Activated T-helper 1 cell treated with anti-CD3 and anti-CD28 coated beads, Interleukin-12 subunit alpha, Interleukin-12 subunit beta, Interleukin-2, Interleukin-4 antibody, amounts not matched to agents 30 ng/mL and 10 ng/mL and 1 ng/mL, durations not matched to agents 14 hours and 24 hours and 36 hours (primary cell): ENCODE measurements at regions of chr12 and their contacts with region 1.

Region 1: DNA sequence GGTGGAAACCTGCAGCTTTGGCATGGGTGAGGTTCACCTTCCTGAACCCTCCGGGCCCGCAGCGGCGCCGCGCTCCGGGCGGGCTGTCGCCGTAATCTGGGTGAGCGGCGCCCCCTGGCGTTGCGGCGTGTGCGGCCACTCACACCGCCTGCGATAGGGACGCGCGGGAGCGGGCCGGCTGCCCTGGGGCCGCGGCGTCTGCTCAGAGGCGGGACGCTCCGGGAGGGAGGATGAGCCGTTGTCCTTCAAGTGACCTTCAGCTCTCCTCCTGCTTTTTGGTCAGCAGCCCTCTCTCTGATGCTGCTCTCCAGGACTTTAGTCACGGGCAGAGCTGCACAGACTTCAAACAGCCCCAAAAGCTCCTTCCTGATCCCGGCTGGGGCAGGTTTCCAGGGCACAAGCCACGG is 211.7 kb upstream of the FKBP4 start:
- DNase-seq: peak; percentile 50
- H3K4me3 Mint-ChIP-seq: no peak overlapping the region
- H3K27ac Mint-ChIP-seq: no peak overlapping the region
- H3K4me1 Mint-ChIP-seq: no peaks in the 10 kb centered on the region
- H3K27me3 Mint-ChIP-seq: peaks cover 29% of the 10 kb centered on the region

Region 2: DNA sequence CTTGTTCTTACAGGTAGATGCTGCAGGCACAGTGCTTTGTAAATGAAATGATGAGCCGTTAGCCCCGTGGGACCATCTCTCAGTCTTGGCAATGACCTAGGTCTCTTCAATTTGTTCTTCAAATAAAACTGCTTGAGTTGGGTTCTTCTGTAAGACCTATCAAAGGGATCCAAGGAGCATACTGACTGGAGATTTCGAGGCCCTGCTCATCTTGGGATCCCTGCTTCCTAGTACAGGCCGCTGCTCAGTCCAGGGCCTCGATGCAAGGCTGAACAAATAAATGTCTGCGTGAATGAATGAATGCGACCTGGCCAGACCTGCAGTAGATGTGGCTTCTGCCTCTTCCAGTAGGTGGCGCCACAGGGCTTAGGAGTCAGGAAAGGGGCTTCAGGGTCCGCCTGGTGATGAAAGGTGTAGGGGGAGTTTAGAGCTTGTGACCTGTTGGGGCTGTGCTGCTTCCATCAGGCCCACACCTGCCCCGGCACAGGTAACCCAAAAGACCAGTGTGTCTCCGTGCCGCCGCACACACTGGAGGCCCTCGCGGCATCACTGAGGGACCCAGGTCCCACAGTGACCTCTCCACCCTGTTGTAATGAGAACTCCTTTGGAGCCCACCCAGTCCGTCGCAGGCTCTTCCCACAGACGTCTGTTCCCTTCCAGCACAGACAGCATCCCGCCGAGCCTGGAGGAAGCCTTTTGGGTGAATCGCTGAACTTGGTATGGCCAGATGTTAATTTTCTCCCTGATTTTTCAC is 525.9 kb before region 1 on chr12:
- intact Hi-C with region 1: loop called (anchors 2 kb)
- DNase-seq: no peak
- H3K4me3 Mint-ChIP-seq: no peak overlapping the region
- H3K27ac Mint-ChIP-seq: no peak overlapping the region
- H3K4me1 Mint-ChIP-seq: peaks cover 10% of the 10 kb centered on the region
- H3K27me3 Mint-ChIP-seq: peaks cover 68% of the 10 kb centered on the region

Region 3: DNA sequence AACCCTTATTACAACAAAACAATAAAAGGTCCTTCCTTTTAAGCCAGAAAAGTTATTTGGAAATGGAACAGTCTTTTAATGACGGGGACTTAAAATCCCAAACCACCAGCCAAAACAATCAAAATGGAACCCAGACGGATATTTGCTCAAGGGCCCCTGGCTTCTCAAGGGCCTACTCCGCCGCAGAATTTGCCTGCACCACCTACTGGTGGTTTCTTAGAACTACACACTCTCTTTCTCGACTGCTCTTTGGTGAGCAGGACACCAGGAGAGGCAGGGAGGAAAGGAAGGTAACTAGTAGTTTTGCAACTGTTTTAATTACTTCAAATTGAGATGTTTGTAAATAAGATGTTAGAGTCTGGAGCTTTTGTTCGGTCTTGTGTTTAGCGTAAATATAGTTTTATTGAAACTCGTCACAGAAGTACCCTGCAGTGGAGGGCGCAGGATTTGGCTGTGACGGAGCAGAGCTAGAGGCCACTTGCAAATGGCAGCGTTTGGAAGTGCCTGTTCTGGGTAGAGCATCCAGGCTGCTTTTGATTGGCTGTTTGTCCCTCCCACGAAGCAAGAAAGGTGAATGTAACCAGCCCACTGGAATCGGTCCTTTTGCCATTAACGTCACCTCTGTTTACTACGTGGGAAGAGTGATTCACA is 291.8 kb before region 1 on chr12:
- intact Hi-C with region 1: loop called (anchors 10 kb)
- DNase-seq: peak; percentile 21
- H3K4me3 Mint-ChIP-seq: no peak overlapping the region
- H3K27ac Mint-ChIP-seq: no peak overlapping the region
- H3K4me1 Mint-ChIP-seq: peaks cover 8% of the 10 kb centered on the region
- H3K27me3 Mint-ChIP-seq: peaks cover 16% of the 10 kb centered on the region

Region 4: GRCh38 chr12:2358986-2359658 is 224.0 kb before region 1 on chr12:
- intact Hi-C with region 1: loop called (anchors 1 kb)
- DNase-seq: no peak
- H3K4me3 Mint-ChIP-seq: peak overlapping the region; percentile 12
- H3K27ac Mint-ChIP-seq: peak overlapping the region; percentile 49
- H3K4me1 Mint-ChIP-seq: peaks cover 53% of the 10 kb centered on the region
- H3K27me3 Mint-ChIP-seq: peaks cover 7% of the 10 kb centered on the region

Region 5: DNA sequence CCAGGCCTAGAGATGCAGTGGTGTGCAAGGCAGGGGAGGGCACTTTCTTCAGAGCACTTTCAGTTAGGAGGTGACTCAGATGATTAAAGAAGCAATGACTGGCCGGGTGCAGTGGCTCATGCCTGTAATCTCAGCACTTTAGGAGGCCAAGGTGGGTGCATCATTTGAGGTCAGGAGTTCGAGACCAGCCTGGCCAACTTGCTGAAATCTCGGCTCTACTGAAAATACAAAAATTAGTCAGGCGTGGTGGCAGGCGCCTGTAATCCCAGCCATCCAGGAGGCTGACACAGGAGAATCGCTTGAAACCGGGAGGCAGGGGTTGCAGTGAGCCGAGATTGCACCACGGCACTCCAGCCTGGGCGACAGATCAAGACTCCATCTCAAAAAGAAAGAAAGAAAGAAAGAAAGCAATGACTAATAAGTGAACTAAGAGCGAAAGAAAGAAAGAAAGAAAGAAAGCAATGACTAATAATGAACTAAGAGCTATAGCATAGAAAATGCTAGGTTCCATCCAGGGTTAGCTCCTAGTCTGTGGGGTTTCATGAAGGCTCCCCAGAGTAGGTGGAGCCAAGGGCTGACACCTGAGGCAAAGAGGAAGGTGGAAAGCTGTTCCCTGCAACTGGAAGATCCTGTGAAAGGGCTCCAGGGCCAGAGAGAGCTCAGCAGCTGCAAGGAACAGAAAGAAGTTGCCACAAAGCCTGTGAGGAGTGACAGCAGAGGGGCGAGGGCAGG is 195.8 kb before region 1 on chr12:
- intact Hi-C with region 1: loop called (anchors 5 kb)
- DNase-seq: peak; percentile 10
- H3K4me3 Mint-ChIP-seq: no peak overlapping the region
- H3K27ac Mint-ChIP-seq: no peak overlapping the region
- H3K4me1 Mint-ChIP-seq: no peaks in the 10 kb centered on the region
- H3K27me3 Mint-ChIP-seq: peaks cover 31% of the 10 kb centered on the region

Region 6: DNA sequence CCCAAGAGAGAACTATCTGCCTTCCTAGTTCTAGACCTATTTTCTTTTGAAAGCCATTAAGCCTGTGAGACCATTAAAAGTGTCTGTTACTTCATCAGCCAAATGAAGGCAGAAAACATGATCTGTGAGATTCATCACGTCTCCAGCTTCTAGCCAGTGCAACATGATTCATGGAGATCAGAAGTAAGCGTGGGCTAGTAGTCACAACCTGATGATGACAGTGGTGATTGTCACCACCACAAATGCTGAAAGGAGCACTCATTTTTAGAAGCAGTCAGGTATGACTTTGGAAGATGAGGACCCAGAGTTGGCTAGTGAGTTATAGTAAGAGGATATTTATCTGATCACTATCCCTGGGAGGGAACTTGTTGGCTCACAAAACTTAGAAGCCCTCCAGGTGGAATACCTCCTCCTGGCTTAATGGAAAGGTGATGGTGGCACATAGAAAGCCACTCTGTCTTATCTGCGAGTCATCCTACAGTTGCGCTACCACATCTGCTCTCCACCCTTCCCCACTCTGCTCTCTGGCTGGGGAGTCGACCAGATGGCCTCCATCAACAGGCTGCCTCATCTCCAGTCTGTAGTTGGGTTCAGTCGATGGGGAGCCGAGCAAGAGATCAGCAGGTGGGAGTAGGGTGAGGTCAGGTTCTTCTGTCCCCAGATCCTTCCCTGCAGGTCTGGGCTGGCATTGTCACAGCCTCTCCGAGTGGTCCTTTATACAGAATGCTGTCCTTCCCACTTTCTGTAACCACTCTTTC is 105.9 kb before region 1 on chr12:
- intact Hi-C with region 1: loop called (anchors 10 kb)
- DNase-seq: no peak
- H3K4me3 Mint-ChIP-seq: no peak overlapping the region
- H3K27ac Mint-ChIP-seq: no peak overlapping the region
- H3K4me1 Mint-ChIP-seq: no peaks in the 10 kb centered on the region
- H3K27me3 Mint-ChIP-seq: peaks cover 11% of the 10 kb centered on the region

Region 7: GRCh38 chr12:2682296-2683251 is 99.5 kb after region 1 on chr12:
- intact Hi-C with region 1: no loop called
- DNase-seq: peak; percentile 31
- H3K4me3 Mint-ChIP-seq: no peak overlapping the region
- H3K27ac Mint-ChIP-seq: peak overlapping the region; percentile 77
- H3K4me1 Mint-ChIP-seq: peaks cover 7% of the 10 kb centered on the region
- H3K27me3 Mint-ChIP-seq: no peaks in the 10 kb centered on the region